Activated T-helper 2 cell treated with anti-CD3 and anti-CD28 coated beads, Interferon-gamma antibody, Interleukin-2, Interleukin-4, amounts not matched to agents 10 μg/mL and 5 μg/mL and 100 μg/mL, durations not matched to agents 14 hours and 24 hours and 36 hours (primary cell): ENCODE measurements at regions of chr1 and their contacts with region 1.

Region 1: DNA sequence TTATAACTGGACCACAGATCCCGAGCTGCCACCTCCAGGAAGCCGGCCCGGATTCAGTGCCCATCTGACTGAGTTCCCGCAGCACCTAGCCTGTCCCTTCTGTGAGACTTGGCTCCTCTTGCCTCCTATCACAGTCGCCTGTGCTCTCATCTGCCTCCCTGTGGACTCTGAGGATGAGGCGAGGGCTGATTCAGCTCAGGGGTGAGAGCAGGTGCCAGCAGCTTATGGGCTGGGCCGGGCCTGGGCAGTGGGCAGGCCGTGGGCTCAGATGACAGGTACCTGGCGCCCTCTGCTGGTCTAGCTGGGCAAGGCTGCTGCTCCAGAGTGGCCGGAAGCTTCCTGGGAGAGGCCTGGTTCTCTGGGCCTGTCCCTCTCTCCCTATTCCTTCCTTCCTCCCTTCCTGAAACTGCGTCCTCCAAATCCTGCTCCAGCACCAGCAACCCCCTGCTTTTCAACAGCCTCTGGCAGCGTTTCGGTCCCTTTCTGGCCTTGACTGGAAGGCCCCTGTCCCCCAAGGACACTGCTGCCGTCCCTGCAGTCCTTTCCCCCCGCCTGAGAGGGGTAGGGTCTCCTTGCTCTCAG is 17.3 kb upstream of the PCSK9 start:
- DNase-seq: peak; percentile 45
- H3K4me3 Mint-ChIP-seq: no peak overlapping the region
- H3K27ac Mint-ChIP-seq: no peak overlapping the region
- H3K4me1 Mint-ChIP-seq: peaks cover 2% of the 10 kb centered on the region
- H3K27me3 Mint-ChIP-seq: peaks cover 3% of the 10 kb centered on the region

Region 2: GRCh38 chr1:54944610-54945544 is 77.2 kb before region 1 on chr1:
- intact Hi-C with region 1: loop called (anchors 1 kb)
- DNase-seq: peak; percentile 60
- H3K4me3 Mint-ChIP-seq: no peak overlapping the region
- H3K27ac Mint-ChIP-seq: no peak overlapping the region
- H3K4me1 Mint-ChIP-seq: peaks cover 10% of the 10 kb centered on the region
- H3K27me3 Mint-ChIP-seq: peaks cover 8% of the 10 kb centered on the region

Region 3: DNA sequence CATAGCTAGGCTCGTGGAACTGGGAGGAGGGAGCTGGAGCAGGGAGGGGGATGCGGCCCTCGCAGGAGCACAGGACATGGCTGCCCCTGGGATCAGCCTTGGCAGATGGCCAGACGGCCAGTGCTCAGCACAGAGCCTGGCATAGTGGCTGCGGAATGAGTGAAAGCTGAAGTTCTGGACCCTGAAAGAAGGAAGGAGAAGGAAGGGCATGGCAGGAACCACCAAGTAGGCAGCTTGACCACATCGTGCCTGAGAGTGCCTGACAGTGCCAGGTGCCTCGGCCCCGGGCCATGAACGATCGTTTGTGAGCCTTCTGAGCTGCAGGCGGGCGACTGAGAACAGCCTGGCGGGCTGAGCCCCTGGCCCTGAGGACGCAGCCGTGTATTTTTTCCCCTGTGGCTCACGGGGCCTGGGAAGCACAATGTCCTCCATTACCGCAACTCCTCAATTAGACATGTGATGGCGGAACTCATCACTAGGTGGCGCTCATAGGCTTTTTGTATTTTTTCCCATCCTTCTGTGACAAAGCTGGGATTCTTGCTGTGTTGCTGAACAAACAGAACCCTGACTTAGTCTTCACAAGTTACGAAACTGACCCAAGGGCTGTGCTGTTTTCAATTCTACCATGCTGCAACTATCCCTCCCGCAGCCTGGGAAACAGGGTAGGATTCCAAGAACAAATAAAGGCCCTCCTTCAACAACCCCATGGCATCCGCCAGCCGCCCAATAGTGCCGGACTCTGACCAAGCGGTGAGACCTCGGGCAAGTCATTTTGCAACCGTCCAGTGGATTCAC is 71.5 kb before region 1 on chr1:
- intact Hi-C with region 1: loop called (anchors 1 kb)
- DNase-seq: peak; percentile 48
- H3K4me3 Mint-ChIP-seq: no peak overlapping the region
- H3K27ac Mint-ChIP-seq: no peak overlapping the region
- H3K4me1 Mint-ChIP-seq: peaks cover 7% of the 10 kb centered on the region
- H3K27me3 Mint-ChIP-seq: peaks cover 6% of the 10 kb centered on the region

Region 4: GRCh38 chr1:54996359-54996868 is 25.6 kb before region 1 on chr1:
- intact Hi-C with region 1: no loop called
- DNase-seq: peak; percentile 70
- H3K4me3 Mint-ChIP-seq: peak overlapping the region; percentile 4
- H3K27ac Mint-ChIP-seq: no peak overlapping the region
- H3K4me1 Mint-ChIP-seq: peaks cover 16% of the 10 kb centered on the region
- H3K27me3 Mint-ChIP-seq: peaks cover 33% of the 10 kb centered on the region